Activated naive CD4-positive, alpha-beta T cell treated with anti-CD3 and anti-CD28 coated beads for 36 hours (primary cell): ENCODE measurements at regions of chr13 and their contacts with region 1.

Region 1: GRCh38 chr13:37068962-37069361 is 9.5 kb upstream of the SUPT20H start:
- DNase-seq: no peak
- H3K4me3 Mint-ChIP-seq: no peak overlapping the region
- H3K27ac Mint-ChIP-seq: no peak overlapping the region
- H3K4me1 Mint-ChIP-seq: no peaks in the 10 kb centered on the region
- H3K27me3 Mint-ChIP-seq: peaks cover 2% of the 10 kb centered on the region

Region 2: DNA sequence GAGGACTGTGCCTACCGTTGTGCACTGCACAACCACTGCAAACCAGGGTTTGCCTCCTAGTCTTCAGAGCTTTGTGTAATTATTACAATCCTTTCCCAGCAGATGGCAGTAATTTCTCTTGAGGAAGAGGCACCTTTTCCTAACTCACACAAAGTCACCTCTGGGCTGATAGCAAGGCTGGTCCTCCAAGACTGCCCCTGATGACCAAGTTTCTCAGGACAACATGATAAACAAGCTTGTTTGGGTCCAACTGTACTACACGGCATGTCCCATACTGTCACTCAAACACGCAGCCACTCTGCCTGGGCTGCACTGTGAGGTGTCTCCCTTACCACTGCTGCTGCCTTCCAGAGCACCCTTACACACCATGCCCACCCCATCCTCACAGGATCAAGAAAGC is 210.7 kb before region 1 on chr13:
- CTCF ChIA-PET with region 1: interaction called, 8 read pairs
- intact Hi-C with region 1: loop called (anchors 2 kb)
- DNase-seq: no peak
- H3K4me3 Mint-ChIP-seq: no peak overlapping the region
- H3K27ac Mint-ChIP-seq: no peak overlapping the region
- H3K4me1 Mint-ChIP-seq: peaks cover 2% of the 10 kb centered on the region
- H3K27me3 Mint-ChIP-seq: peaks cover 27% of the 10 kb centered on the region